ENCODE measurements at regions of chr2 and their contacts with region 1.

Region 1: DNA sequence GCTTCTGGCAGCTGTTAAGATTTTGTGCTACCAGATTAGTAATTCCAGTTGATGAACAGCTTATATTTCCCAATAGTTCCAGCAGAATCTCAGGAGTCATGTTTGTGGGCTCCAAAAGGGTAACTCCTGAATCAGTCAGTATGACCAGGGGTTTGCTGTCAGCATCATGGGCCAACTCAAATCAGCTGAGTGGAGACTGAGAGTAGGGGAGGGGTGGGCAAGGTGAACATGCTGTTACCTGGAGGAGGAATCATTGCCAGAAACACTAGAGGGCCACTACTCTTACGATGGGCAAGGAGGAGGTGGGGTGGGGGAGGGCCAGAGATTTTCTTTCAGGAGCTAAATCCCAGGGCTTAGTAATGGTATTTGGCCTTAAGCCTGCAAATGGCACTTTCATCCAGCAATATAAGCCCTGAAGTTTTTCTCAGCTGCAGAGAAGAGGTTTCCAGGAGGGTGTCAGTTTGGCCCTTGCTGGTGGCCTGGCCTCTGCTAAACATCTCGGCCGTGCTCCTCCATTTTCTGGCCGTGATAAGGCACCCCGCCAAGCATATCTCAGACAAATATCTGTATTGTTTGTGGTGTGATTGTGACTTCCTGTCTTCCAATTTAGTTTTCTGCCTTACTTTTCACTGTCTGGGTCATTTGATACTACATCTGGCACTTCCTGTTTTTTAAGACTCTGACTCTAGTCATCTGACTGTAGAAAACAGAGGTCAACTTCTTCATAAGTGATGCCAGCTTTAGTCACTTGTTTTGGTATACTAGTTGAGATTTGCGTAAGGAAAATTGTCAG is 120.5 kb upstream of the CXCR4 start:
- DNase-seq: peak; percentile 44
- ATAC-seq: peak; percentile 82
- H3K4me3 Mint-ChIP-seq: peak overlapping the region; percentile 15
- H3K27ac Mint-ChIP-seq: peak overlapping the region; percentile 93
- H3K4me1 Mint-ChIP-seq: peaks cover 43% of the 10 kb centered on the region
- H3K27me3 Mint-ChIP-seq: no peaks in the 10 kb centered on the region

Region 2: DNA sequence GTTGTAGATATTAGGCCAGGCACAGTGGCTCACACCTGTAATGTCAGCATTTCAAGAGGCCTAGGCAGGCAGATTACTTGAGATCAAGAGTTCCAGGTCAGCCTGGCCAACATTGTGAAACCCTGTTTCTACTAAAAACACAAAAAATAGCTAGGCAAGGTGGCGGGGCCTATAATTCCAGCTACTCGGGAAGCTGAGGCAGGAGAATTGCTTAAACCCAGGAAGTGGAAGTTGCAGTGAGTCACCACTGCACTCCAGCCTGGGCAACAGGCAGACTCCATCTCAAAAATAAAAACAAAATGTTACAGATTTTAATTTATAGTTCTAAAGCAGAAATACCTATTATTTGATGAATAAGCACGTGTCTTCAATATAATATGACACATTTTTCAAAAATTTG is 562.5 kb before region 1 on chr2:
- CTCF ChIA-PET with region 1: no interaction called
- POLR2A ChIA-PET with region 1: no interaction called
- intact Hi-C with region 1: no loop called
- DNase-seq: no peak
- ATAC-seq: no peak
- H3K4me3 Mint-ChIP-seq: no peak overlapping the region
- H3K27ac Mint-ChIP-seq: no peak overlapping the region
- H3K4me1 Mint-ChIP-seq: no peaks in the 10 kb centered on the region
- H3K27me3 Mint-ChIP-seq: no peaks in the 10 kb centered on the region

Region 3: GRCh38 chr2:136212423-136213378 is 25.8 kb before region 1 on chr2:
- CTCF ChIA-PET with region 1: interaction called, 4 read pairs
- POLR2A ChIA-PET with region 1: interaction called, 3 read pairs
- intact Hi-C with region 1: loop called in 1 of 2 experiments (anchors 2 kb)
- DNase-seq: peak; percentile 51
- ATAC-seq: peak; percentile 95
- H3K4me3 Mint-ChIP-seq: no peak overlapping the region
- H3K27ac Mint-ChIP-seq: peak overlapping the region; percentile 72
- H3K4me1 Mint-ChIP-seq: peaks cover 42% of the 10 kb centered on the region
- H3K27me3 Mint-ChIP-seq: no peaks in the 10 kb centered on the region